CD4-positive, alpha-beta T cell (primary cell): ENCODE measurements at regions of chr3 and their contacts with region 1.

Region 1: DNA sequence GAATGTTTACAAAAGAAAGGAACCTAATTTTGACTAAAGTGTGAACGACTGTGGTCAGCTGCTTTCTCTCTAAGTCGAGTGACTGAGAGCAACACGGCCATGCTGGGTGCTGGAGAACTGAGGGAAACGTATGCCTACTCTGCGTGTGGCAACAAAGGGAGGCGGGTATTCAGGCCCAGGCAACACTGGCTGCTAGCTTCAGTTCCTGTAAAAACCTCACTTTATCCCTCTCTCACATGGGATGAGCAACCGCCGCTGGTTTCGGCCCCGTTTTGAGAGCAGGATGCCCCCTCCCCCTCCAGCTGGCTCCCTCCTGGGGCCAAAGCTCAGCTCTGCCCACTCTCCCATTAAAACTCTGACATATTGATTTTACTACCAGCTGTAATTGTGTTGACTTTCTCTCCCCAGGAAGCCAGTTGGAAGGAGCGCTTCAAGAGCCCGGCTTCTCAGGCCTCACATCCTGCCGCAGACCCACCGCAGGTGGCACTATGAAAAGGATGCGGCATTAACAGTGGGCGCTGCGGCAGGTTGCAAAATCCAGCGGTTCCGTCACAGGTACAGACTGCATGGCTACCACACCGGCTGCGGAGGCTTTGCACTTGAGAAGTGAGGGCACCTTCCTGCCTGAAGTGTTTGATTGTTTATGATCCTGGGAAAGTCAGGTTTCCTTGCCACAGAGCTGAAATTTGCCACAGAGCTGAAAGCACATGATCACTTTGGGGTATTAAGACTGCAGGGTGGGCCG is 12.7 kb downstream of the PLXND1 start:
- DNase-seq: peak in 13 of 14 experiments; percentile 27 to 82 (median 51)
- ATAC-seq: peak; percentile 71
- H3K4me3 ChIP-seq: peak overlapping the region; percentile 25
- H3K4me3 Mint-ChIP-seq: peak overlapping the region; percentile 73
- H3K27ac ChIP-seq: no peak overlapping the region
- H3K27ac Mint-ChIP-seq: peak overlapping the region; percentile 53
- H3K4me1 ChIP-seq: peaks cover 43% of the 10 kb centered on the region
- H3K4me1 Mint-ChIP-seq: peaks cover 40% of the 10 kb centered on the region
- H3K27me3 ChIP-seq: no peaks in the 10 kb centered on the region
- H3K27me3 Mint-ChIP-seq: no peaks in the 10 kb centered on the region
- CTCF ChIP-seq: no peak

Region 2: GRCh38 chr3:127848131-127849129 is 1745.3 kb before region 1 on chr3:
- CTCF ChIA-PET with region 1: no interaction called
- POLR2A ChIA-PET with region 1: no interaction called
- intact Hi-C with region 1: no loop called
- DNase-seq: no peak
- ATAC-seq: no peak
- H3K4me3 ChIP-seq: no peak overlapping the region
- H3K4me3 Mint-ChIP-seq: no peak overlapping the region
- H3K27ac ChIP-seq: no peak overlapping the region
- H3K27ac Mint-ChIP-seq: no peak overlapping the region
- H3K4me1 ChIP-seq: no peaks in the 10 kb centered on the region
- H3K4me1 Mint-ChIP-seq: no peaks in the 10 kb centered on the region
- H3K27me3 ChIP-seq: peaks cover 0 to 8% of the 10 kb centered on the region in 2 experiments
- H3K27me3 Mint-ChIP-seq: peaks cover 10% of the 10 kb centered on the region
- CTCF ChIP-seq: no peak

Region 3: DNA sequence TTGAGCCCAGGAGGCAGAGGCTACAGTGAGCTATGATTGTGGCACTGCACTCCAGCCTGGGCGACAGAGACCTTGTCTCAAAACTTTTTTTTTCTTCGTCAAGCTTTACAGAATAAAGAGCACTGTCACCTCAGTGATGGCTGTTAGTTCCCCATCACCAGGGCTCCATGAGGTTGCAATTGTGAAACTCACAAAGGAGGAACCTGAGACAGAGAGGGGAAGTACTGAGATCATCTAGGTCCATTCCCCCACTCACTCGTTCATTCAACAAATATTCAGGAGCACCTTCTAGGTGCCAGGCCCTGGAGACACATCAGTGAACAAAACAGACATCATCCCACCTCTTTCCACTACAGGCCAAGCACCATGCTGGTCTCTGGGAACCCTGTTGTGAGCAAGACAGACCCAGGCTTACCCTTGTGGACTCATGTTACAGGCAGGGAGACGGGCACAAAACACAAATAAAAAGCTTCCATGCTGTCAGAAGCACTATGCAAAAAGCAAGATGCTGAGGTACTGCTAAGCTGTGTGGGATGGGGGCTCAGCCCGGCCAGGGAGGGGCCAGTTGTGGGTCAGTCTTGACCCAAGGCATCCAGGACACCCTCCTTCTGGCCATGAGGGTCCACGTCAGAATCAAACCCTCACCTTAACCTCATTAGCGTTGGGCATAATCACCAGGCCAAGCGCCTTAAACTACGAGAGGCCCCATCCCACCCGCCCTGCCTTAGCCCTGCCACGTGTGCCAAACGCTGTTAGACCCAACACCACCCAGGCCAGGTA is 67.5 kb before region 1 on chr3:
- CTCF ChIA-PET with region 1: no interaction called
- POLR2A ChIA-PET with region 1: no interaction called
- intact Hi-C with region 1: no loop called
- DNase-seq: peak in 3 of 14 experiments; percentile 18 to 67 (median 54)
- ATAC-seq: no peak
- H3K4me3 ChIP-seq: no peak overlapping the region
- H3K4me3 Mint-ChIP-seq: no peak overlapping the region
- H3K27ac ChIP-seq: no peak overlapping the region
- H3K27ac Mint-ChIP-seq: no peak overlapping the region
- H3K4me1 ChIP-seq: peaks cover 3% of the 10 kb centered on the region
- H3K4me1 Mint-ChIP-seq: no peaks in the 10 kb centered on the region
- H3K27me3 ChIP-seq: no peaks in the 10 kb centered on the region
- H3K27me3 Mint-ChIP-seq: no peaks in the 10 kb centered on the region
- CTCF ChIP-seq: no peak

Region 4: GRCh38 chr3:129606636-129607390 is 13.0 kb after region 1 on chr3 and contains the start of gene PLXND1:
- CTCF ChIA-PET with region 1: interaction called, 3 read pairs
- POLR2A ChIA-PET with region 1: interaction called, 34 read pairs
- intact Hi-C with region 1: no loop called
- DNase-seq: peak in 11 of 14 experiments; percentile 10 to 79 (median 46)
- ATAC-seq: peak; percentile 53
- H3K4me3 ChIP-seq: peak within 1 kb of the TSS; percentile 61
- H3K4me3 Mint-ChIP-seq: peak within 1 kb of the TSS; percentile 95
- H3K27ac ChIP-seq: no peak within 1 kb of the TSS
- H3K27ac Mint-ChIP-seq: peak within 1 kb of the TSS; percentile 67
- H3K4me1 ChIP-seq: peaks cover 51% of the 10 kb centered on the region
- H3K4me1 Mint-ChIP-seq: peaks cover 33% of the 10 kb centered on the region
- H3K27me3 ChIP-seq: peaks cover 0 to 5% of the 10 kb centered on the region in 2 experiments
- H3K27me3 Mint-ChIP-seq: peaks cover 20% of the 10 kb centered on the region
- CTCF ChIP-seq: no peak
- total RNA-seq, gene PLXND1: 61.7 to 62.5 TPM